ENCODE measurements at regions of chr10 and their contacts with region 1.

Region 1: GRCh38 chr10:59580026-59580863 is 129.4 kb downstream of the SLC16A9 start:
- DNase-seq: peak; percentile 79
- ATAC-seq: peak; percentile 64
- H3K4me3 ChIP-seq: no peak overlapping the region
- H3K27ac ChIP-seq: no peak overlapping the region
- H3K4me1 ChIP-seq: peaks cover 21% of the 10 kb centered on the region
- H3K27me3 ChIP-seq: no peaks in the 10 kb centered on the region
- CTCF ChIP-seq: peak; percentile 94

Region 2: GRCh38 chr10:59290448-59290847 is 289.8 kb before region 1 on chr10:
- CTCF ChIA-PET with region 1: no interaction called
- POLR2A ChIA-PET with region 1: no interaction called
- intact Hi-C with region 1: loop called (anchors 1 kb)
- DNase-seq: peak; percentile 42
- ATAC-seq: peak; percentile 29; the same call in 1 of the 2 replicates
- H3K4me3 ChIP-seq: no peak overlapping the region
- H3K27ac ChIP-seq: no peak overlapping the region
- H3K4me1 ChIP-seq: no peaks in the 10 kb centered on the region
- H3K27me3 ChIP-seq: peaks cover 27% of the 10 kb centered on the region; the same call in 1 of the 2 replicates
- CTCF ChIP-seq: peak; percentile 77

Region 3: DNA sequence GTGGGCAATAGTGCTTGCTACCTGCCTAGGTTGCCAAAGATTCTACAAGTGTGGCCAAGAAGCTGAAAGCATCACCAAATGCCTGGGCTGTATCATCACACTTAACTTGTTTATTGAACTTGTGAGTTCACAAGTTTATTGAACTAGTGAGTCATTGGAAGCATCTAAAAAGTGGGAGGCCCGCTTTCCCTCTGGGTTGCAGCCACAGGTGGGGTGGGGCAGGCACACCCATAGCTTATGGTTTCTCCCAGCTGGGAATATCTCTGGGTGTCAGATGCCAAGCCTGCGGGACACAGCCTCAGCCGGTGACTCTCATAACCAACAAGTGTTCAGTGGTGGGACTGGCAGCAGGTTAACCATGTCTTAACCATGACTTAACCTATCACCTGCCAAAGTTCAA is 71.9 kb before region 1 on chr10:
- CTCF ChIA-PET with region 1: no interaction called
- POLR2A ChIA-PET with region 1: no interaction called
- intact Hi-C with region 1: loop called (anchors 2 kb)
- DNase-seq: peak; percentile 100
- ATAC-seq: peak; percentile 99
- H3K4me3 ChIP-seq: no peak overlapping the region
- H3K27ac ChIP-seq: peak overlapping the region; percentile 71
- H3K4me1 ChIP-seq: peaks cover 36% of the 10 kb centered on the region
- H3K27me3 ChIP-seq: no peaks in the 10 kb centered on the region
- CTCF ChIP-seq: no peak

Measured in PC-3 (cell line).